Activated CD4-positive, alpha-beta T cell treated with anti-CD3 and anti-CD28 coated beads, Interleukin-2, amount 10 ng/mL, durations not matched to agents 24 days and 14 days (primary cell): ENCODE measurements at regions of chr12 and their contacts with region 1.

Region 1: DNA sequence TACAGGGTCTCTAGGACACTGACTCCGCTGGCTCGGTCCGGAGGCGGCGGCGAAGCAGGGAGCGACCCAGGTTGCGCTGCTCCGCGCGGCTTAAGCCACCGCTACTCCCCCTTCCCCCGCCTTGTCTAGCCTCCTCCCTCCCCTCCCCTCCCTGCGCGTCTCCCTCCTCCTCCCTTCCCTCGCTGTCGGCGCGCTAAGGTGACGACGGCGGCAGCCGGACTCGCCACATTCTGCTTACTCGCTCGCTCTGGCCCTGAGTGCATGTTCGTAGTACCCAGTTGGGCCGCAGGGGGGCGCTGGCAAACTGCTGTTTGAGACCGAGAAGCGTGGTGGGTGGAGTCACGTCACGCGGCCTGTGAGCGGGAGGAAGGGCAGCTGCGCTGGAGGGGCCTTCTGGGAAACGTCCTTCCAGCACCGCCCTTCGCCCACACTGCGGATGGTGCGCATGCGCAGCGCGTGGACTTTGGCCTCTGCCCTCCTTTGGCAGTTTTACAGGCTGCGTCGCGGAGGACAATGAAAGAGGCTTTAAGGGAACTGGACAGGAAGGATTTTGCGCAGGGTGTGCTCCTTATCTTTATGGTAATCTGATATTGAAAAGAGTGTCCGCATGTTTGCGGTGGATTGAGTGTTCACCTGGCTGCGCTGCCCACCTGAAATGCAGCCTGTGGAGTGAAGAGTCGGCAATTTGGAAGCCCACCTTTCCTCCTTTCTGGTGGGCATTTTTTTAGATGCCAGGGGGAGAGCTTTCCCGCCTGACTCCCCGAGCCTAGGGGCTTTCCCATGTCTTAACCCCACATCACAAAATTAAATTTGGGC is at the start of gene SCAF11:
- DNase-seq: peak; percentile 100
- H3K4me3 Mint-ChIP-seq: peak within 1 kb of the TSS; percentile 96
- H3K27ac Mint-ChIP-seq: peak within 1 kb of the TSS; percentile 99
- H3K4me1 Mint-ChIP-seq: peaks cover 42% of the 10 kb centered on the region
- H3K27me3 Mint-ChIP-seq: peaks cover 5% of the 10 kb centered on the region
- total RNA-seq, gene SCAF11: 126 and 140 TPM in 2 replicates

Region 2: GRCh38 chr12:46110928-46111699 is 120.4 kb after region 1 on chr12:
- intact Hi-C with region 1: no loop called
- DNase-seq: no peak
- H3K4me3 Mint-ChIP-seq: no peak overlapping the region
- H3K27ac Mint-ChIP-seq: no peak overlapping the region
- H3K4me1 Mint-ChIP-seq: no peaks in the 10 kb centered on the region
- H3K27me3 Mint-ChIP-seq: peaks cover 17% of the 10 kb centered on the region

Region 3: DNA sequence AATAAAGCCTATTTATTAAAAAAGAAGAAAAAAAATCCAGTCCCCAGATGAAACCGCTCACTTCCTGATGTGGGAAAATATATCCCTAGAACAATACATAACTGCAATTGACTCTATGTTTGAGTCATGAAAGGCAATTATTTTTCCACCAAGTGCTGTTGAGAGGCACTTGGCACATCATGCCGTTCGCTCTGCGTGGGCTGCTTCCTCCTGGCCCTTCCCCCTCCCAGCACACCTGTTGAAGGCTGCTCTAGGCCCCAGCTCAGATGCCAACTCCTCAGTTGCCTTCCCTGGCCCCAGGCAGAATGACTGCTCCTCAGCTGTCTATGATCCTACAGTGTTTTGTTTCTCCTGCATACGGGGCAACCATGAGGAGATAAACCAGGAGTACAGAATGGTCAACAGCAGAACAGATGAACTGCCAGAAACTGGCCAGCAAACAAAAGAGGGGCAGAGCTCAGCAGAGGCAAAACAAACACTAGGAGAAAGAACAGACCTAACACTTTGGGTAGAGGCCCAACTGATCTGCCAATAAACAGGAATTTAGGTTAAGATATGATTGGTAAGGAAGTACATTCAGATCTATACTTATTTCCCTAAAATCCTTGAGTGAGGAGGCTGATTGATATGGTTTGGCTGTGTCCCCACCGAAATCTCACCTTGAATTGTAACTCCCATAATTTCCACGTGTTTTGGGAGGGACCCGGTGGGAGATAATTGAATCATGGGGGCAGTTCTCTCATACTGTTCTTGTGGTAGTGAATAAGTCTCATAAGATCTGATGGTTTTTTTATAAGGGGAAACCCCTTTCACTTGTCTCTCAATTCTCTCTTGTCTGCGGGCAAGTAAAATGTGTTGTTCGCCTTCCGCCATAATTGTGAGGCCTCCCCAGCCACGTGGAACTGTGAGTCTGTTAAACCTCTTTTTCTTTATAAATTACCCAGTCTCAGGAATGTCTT is 219.5 kb after region 1 on chr12:
- intact Hi-C with region 1: loop called (anchors 1 kb)
- DNase-seq: peak; percentile 79
- H3K4me3 Mint-ChIP-seq: peak overlapping the region; percentile 65
- H3K27ac Mint-ChIP-seq: peak overlapping the region; percentile 94
- H3K4me1 Mint-ChIP-seq: peaks cover 69% of the 10 kb centered on the region
- H3K27me3 Mint-ChIP-seq: no peaks in the 10 kb centered on the region

Region 4: DNA sequence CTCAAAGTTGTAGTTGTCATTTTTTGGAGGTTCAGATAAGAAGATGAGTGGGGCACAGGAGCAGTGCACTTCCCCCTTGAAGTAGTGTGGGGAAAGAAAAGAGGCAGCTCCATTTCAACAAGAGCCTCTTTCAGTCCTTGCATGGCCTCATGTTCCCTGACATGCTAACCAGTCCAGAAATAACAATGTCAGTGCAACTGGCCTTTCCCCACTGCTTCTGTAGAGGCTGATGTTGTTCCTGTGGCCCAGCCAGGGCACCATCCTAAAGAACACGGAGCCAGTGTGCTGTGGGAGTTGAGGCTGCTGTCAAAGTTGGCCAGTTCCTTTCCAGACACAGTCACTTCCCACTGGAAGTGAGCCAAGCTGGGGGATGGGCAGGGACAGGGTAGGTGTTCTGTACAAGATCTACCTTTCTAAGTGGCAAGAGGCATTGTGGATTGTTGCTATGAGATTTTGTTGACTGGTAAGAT is 459.6 kb after region 1 on chr12:
- intact Hi-C with region 1: loop called (anchors 10 kb)
- DNase-seq: peak; percentile 48
- H3K4me3 Mint-ChIP-seq: no peak overlapping the region
- H3K27ac Mint-ChIP-seq: peak overlapping the region; percentile 12
- H3K4me1 Mint-ChIP-seq: peaks cover 46% of the 10 kb centered on the region
- H3K27me3 Mint-ChIP-seq: no peaks in the 10 kb centered on the region

Region 5: DNA sequence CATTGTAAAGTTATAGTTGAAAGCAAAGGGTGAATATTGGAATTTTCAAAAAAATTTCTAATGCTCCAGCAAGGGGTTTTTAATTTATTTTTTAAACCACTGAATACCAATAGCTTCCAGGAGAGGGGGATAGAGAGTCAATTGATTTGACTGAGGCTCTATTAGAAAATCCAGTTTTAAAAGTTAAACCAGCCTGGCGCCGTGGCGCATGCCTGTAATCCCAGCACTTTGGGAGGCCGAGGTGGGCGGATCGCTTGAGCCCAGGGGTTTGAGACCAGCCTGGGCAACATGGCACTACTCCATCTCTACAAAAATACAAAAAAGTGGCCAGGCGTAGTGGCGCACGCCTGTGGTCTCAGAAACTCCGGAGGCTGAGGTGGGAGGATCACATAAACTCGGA is 685.1 kb after region 1 on chr12:
- intact Hi-C with region 1: loop called (anchors 5 kb)
- DNase-seq: peak; percentile 62
- H3K4me3 Mint-ChIP-seq: no peak overlapping the region
- H3K27ac Mint-ChIP-seq: no peak overlapping the region
- H3K4me1 Mint-ChIP-seq: peaks cover 11% of the 10 kb centered on the region
- H3K27me3 Mint-ChIP-seq: peaks cover 2% of the 10 kb centered on the region